Activated B cell treated with CpG ODN at 0.5 μM for 24 hours (primary cell): ENCODE measurements at regions of chr7 and their contacts with region 1.

Region 1: DNA sequence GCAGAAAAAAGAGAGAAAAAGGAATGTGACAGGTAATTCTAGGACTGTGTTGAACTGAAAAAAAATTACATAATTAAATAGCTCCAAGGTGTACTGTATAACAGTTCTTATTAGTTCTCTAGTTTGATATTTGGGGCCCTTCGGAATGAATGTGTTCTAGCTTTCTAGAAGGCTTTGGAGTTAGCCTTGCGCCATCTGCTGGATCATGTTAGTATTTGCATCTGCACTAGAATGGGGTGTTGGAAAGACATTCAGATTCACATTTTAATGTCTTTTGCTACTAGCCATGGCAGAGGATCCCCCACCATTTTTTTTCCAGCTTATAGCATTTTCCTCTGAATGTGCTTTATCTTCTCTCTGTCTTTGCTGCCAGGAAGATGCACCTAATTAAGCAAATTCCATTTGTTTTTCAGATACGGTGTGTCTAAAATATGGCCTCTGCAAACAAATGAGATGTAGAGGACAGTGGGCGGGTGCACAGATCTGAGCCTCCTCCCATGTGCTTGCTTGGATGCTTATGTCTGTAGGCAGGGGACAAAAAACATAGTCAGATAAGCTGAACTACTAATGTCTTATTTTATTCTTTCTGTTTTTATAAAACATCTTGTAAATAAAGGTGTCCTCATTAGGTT is 238.5 kb downstream of the PHF14 start:
- DNase-seq: no peak
- ATAC-seq: peak; percentile 81
- H3K4me3 Mint-ChIP-seq: no peak overlapping the region
- H3K27ac Mint-ChIP-seq: no peak overlapping the region
- H3K4me1 Mint-ChIP-seq: no peaks in the 10 kb centered on the region
- H3K27me3 Mint-ChIP-seq: no peaks in the 10 kb centered on the region
- CTCF ChIP-seq: peak; percentile 49

Region 2: GRCh38 chr7:9937944-9938631 is 1274.1 kb before region 1 on chr7:
- CTCF ChIA-PET with region 1: no interaction called
- POLR2A ChIA-PET with region 1: no interaction called
- intact Hi-C with region 1: loop called (anchors 10 kb)
- DNase-seq: no peak
- ATAC-seq: no peak
- H3K4me3 Mint-ChIP-seq: no peak overlapping the region
- H3K27ac Mint-ChIP-seq: no peak overlapping the region
- H3K4me1 Mint-ChIP-seq: no peaks in the 10 kb centered on the region
- H3K27me3 Mint-ChIP-seq: no peaks in the 10 kb centered on the region
- CTCF ChIP-seq: no peak

Region 3: DNA sequence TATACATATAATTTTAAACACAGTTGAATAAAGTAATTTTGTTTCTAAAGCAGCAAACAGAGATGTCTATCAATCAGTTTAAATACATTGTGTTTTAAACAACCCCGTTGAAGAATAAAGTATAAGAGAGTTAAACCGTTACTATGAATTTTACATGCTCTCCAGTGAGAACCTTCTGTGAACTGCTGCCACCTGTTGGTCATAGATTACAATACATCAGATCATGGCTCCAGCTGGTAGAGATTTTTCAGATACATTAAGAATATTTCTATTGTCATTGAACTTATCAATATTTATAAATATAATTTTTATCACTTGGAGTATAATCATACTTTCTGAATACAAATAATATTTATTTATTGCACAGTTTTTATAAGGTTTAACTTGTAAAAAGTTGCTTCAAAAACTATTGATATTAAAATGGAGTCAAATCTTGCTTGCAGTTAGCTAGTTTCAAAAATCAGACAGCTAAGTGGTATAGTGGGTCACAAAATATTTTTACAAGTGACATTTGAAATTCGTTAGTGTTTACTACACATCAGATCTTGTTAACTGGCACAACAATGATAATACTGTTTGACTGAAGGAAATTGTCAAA is 799.7 kb before region 1 on chr7:
- CTCF ChIA-PET with region 1: no interaction called
- POLR2A ChIA-PET with region 1: no interaction called
- intact Hi-C with region 1: loop called (anchors 5 kb)
- DNase-seq: no peak
- ATAC-seq: no peak
- H3K4me3 Mint-ChIP-seq: no peak overlapping the region
- H3K27ac Mint-ChIP-seq: no peak overlapping the region
- H3K4me1 Mint-ChIP-seq: no peaks in the 10 kb centered on the region
- H3K27me3 Mint-ChIP-seq: no peaks in the 10 kb centered on the region
- CTCF ChIP-seq: peak; percentile 16

Region 4: GRCh38 chr7:10708447-10708846 is 503.7 kb before region 1 on chr7:
- CTCF ChIA-PET with region 1: no interaction called
- POLR2A ChIA-PET with region 1: no interaction called
- intact Hi-C with region 1: loop called (anchors 10 kb)
- DNase-seq: no peak
- ATAC-seq: no peak
- H3K4me3 Mint-ChIP-seq: no peak overlapping the region
- H3K27ac Mint-ChIP-seq: no peak overlapping the region
- H3K4me1 Mint-ChIP-seq: peaks cover 8% of the 10 kb centered on the region
- H3K27me3 Mint-ChIP-seq: no peaks in the 10 kb centered on the region
- CTCF ChIP-seq: no peak

Region 5: DNA sequence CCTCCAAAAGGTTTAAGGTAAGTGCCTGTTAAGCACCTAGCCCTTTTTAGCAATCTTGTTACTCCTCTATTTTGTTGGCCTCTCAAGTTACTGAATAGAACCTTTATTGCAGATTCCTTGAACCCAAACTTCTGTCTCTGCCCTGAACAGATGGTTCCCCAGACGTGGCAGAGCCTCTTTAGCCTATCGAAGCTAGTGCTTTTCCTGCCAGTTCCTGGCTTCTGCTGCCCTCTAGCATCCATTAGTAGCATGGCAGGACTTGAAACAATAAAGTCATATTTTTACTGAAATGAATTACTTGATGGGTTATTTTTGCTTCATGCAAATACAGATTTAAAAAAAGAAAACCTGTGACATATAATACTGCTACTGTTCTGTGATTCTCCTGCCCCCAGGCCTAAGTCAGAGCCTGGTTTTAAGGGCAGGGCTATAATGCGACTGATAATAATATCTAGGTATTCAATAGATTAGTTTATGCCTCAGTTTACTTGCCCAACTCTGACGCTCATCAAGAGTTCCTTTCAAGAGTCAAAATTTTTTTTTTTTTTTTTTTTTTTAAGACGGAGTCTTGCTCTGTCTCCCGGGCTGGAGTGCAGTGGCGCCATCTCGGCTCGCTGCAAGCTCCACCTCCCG is 322.8 kb before region 1 on chr7:
- CTCF ChIA-PET with region 1: interaction called, 10 read pairs
- POLR2A ChIA-PET with region 1: no interaction called
- intact Hi-C with region 1: loop called (anchors 1 kb)
- DNase-seq: no peak
- ATAC-seq: peak; percentile 66
- H3K4me3 Mint-ChIP-seq: peak overlapping the region; percentile 54
- H3K27ac Mint-ChIP-seq: peak overlapping the region; percentile 20
- H3K4me1 Mint-ChIP-seq: peaks cover 9% of the 10 kb centered on the region
- H3K27me3 Mint-ChIP-seq: peaks cover 3% of the 10 kb centered on the region
- CTCF ChIP-seq: no peak

Region 6: GRCh38 chr7:11170863-11171568 is 41.2 kb before region 1 on chr7:
- CTCF ChIA-PET with region 1: no interaction called
- POLR2A ChIA-PET with region 1: no interaction called
- intact Hi-C with region 1: no loop called
- DNase-seq: no peak
- ATAC-seq: no peak
- H3K4me3 Mint-ChIP-seq: no peak overlapping the region
- H3K27ac Mint-ChIP-seq: no peak overlapping the region
- H3K4me1 Mint-ChIP-seq: no peaks in the 10 kb centered on the region
- H3K27me3 Mint-ChIP-seq: no peaks in the 10 kb centered on the region
- CTCF ChIP-seq: no peak

Region 7: GRCh38 chr7:11193131-11193811 is 18.9 kb before region 1 on chr7:
- CTCF ChIA-PET with region 1: interaction called, 13 read pairs
- POLR2A ChIA-PET with region 1: no interaction called
- intact Hi-C with region 1: no loop called
- DNase-seq: no peak
- ATAC-seq: no peak
- H3K4me3 Mint-ChIP-seq: no peak overlapping the region
- H3K27ac Mint-ChIP-seq: no peak overlapping the region
- H3K4me1 Mint-ChIP-seq: no peaks in the 10 kb centered on the region
- H3K27me3 Mint-ChIP-seq: no peaks in the 10 kb centered on the region
- CTCF ChIP-seq: no peak